ENCODE measurements at regions of chr5 and their contacts with region 1.

Region 1: GRCh38 chr5:31581498-31582099 is 49.5 kb downstream of the C5orf22 start:
- DNase-seq: peak in 1 of 4 donors; percentile 7
- ATAC-seq: no peak
- H3K4me3 ChIP-seq: no peak overlapping the region
- H3K27ac ChIP-seq: no peak overlapping the region
- H3K4me1 ChIP-seq: no peaks in the 10 kb centered on the region
- H3K27me3 ChIP-seq: no peaks in the 10 kb centered on the region
- CTCF ChIP-seq: peak; percentile 17 to 56 (median 44)
- POLR2A ChIP-seq: no peak

Region 2: GRCh38 chr5:32076699-32077695 is 495.4 kb after region 1 on chr5:
- intact Hi-C with region 1: loop called (anchors 10 kb)
- DNase-seq: peak in 3 of 4 donors; percentile 41 to 50 (median 44)
- ATAC-seq: no peak
- H3K4me3 ChIP-seq: no peak overlapping the region
- H3K27ac ChIP-seq: no peak overlapping the region
- H3K4me1 ChIP-seq: no peaks in the 10 kb centered on the region
- H3K27me3 ChIP-seq: no peaks in the 10 kb centered on the region
- CTCF ChIP-seq: peak; percentile 49 to 71 (median 65)
- POLR2A ChIP-seq: no peak

Measured in body of pancreas (tissue), 4 donors.